Stomach (tissue), 19 donors: ENCODE measurements at regions of chr1 and their contacts with region 1.

Region 1: GRCh38 chr1:156927215-156928042 is 7.0 kb downstream of the LRRC71 start:
- DNase-seq: peak; percentile 75 to 90
- H3K4me3 ChIP-seq: peak overlapping the region; percentile 22 to 47 (median 29)
- H3K27ac ChIP-seq: no peak overlapping the region
- H3K4me1 ChIP-seq: peaks cover 19 to 42% (median 31%) of the 10 kb centered on the region in 4 donors
- H3K27me3 ChIP-seq: peaks cover 15 to 82% (median 70%) of the 10 kb centered on the region in 3 donors
- CTCF ChIP-seq: peak in 5 of 7 experiments; percentile 28 to 55 (median 48)
- EP300 ChIP-seq: no peak
- POLR2A ChIP-seq: no peak

Region 2: GRCh38 chr1:156705918-156706656 is 221.3 kb before region 1 on chr1:
- intact Hi-C with region 1: no loop called
- DNase-seq: peak; percentile 68 to 91
- H3K4me3 ChIP-seq: peak overlapping the region; percentile 40 to 56 (median 44)
- H3K27ac ChIP-seq: peak overlapping the region in 4 of 5 donors; percentile 32 to 83 (median 50)
- H3K4me1 ChIP-seq: peaks cover 26 to 64% (median 56%) of the 10 kb centered on the region in 4 donors
- H3K27me3 ChIP-seq: peaks cover 0 to 61% (median 23%) of the 10 kb centered on the region in 3 donors
- CTCF ChIP-seq: peak in 5 of 7 experiments; percentile 53 to 86 (median 68)
- EP300 ChIP-seq: no peak
- POLR2A ChIP-seq: no peak

Region 3: DNA sequence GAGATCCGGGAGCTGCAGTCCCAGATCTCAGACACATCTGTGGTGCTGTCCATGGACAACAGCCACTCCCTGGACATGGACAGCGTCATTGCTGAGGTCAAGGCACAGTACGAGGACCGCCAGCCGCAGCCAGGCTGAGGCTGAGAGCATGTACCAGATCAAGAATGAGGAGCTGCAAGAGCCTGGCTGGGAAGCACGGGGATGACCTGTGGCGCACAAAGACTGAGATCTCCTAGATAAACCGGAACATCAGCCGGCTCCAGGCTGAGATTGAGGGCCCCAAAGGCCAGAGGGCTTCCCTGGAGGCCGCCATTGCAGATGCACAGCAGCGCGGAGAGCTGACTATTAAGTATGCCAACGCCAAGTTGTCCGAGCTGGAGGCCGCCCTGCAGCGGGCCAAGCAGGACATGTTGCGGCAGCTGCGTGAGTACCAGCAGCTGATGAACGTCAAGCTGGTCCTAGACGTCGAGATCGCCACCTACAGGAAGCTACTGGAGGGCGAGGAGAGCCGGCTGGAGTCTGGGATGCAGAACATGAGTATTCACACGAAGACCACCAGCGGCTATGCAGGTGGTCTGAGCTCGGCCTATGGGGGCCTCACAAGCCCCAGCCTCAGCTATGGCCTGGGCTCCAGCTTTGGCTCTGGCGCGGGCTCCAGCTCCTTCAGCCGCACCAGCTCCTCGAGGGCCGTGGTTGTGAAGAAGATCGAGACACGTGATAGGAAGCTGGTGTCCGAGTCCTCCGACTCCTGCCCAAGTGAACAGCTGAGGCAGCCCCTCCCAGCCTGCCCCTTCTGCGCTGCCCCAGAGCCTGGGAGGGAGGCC is 146.7 kb after region 1 on chr1:
- intact Hi-C with region 1: loop called (anchors 10 kb)
- DNase-seq: peak; percentile 77 to 90
- H3K4me3 ChIP-seq: peak overlapping the region in 3 of 4 donors; percentile 17 to 32 (median 20)
- H3K27ac ChIP-seq: no peak overlapping the region
- H3K4me1 ChIP-seq: peaks cover 4 to 10% (median 8%) of the 10 kb centered on the region in 4 donors
- H3K27me3 ChIP-seq: peaks cover 0 to 15% (median 0%) of the 10 kb centered on the region in 3 donors
- CTCF ChIP-seq: peak in 5 of 7 experiments; percentile 54 to 67 (median 63)
- EP300 ChIP-seq: no peak
- POLR2A ChIP-seq: no peak